ENCODE measurements at regions of chr15 and their contacts with region 1.

Region 1: DNA sequence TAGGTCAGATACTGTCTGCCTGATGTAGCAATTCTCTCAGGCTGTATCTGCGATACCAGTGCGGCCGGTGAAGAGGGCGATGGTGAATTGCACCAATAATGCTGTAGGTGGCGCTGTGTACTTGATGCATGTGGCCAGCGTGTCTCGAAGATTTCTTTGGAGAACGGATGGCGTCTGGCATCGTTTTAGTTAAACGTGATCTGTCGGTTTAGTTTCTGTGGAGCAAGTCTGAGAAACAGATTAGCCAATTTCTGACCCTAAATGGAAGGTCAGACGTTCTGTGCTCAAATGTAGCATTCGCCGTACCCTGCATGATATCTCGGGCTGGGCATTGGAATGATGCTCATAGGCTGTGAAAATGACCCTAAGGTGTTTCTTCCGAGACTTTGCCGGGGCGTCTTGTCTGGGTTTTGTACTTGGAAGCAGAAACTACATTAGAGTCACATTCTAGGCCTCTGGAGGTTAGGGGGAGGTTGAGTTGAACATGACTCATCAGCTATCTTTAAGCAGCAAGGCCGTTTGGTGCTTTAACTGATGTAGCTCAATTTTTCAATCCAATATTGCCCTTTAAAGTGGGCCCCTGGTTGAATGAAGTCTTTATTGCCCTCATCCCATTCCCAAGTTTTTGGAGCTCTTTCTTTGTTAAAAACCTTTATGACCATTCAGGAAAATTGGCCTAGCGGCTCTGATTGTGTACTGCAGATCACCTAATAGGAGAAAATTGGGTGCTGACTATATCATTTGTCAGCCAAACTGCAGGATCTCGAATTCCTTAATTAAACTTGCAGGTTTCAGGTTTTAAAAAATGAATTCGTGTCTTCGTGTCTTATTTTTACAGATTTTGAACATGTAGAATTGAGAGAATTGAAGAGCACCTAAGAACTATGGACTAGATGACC is 80.0 kb downstream of the SQOR start:
- DNase-seq: peak; percentile 65
- H3K4me3 ChIP-seq: no peak overlapping the region
- H3K27ac ChIP-seq: peak overlapping the region in 3 of 4 donors; percentile 13 to 48 (median 47)
- H3K4me1 ChIP-seq: peaks cover 4 to 12% (median 7%) of the 10 kb centered on the region in 4 donors
- H3K27me3 ChIP-seq: peaks cover 4% of the 10 kb centered on the region
- CTCF ChIP-seq: peak; percentile 79 to 90 (median 83)
- EP300 ChIP-seq: no peak
- POLR2A ChIP-seq: no peak

Region 2: DNA sequence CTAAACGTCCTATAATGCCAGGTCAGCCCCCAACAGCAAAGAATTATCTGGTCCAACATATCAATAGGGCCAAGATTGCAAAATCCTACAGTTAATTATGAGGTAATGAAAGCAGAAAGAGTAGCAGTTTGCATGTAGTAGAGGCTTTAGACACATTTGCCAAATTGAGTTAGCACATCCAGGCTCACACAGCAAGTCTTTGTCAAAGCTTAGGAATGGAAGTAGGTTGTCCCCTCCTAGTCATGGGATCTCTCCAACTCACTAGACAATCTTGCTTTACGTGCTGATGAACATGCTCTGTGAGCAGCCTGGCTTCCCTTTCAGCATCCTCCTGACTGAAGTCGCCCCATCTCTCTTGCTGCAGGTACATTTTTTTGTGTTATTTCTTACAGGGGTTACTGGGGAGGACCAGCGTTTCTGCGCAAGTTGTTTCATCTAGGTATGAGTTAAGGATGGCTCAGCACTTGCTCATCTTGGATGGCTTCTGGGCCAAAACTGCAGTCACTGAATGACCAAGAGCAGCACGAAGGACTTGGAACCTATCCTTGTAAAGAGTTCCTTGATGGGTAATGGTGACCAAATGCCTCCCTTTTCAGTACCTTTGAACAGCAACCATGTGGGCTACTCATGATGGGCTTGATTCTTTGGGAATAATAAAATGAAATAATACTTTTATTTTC is 24.1 kb before region 1 on chr15:
- in situ Hi-C with region 1: no loop called
- intact Hi-C with region 1: loop called (anchors 1 kb)
- DNase-seq: no peak
- H3K4me3 ChIP-seq: no peak overlapping the region
- H3K27ac ChIP-seq: no peak overlapping the region
- H3K4me1 ChIP-seq: no peaks in the 10 kb centered on the region
- H3K27me3 ChIP-seq: no peaks in the 10 kb centered on the region
- CTCF ChIP-seq: no peak
- EP300 ChIP-seq: no peak
- POLR2A ChIP-seq: no peak

Region 3: GRCh38 chr15:45780352-45780751 is 65.5 kb after region 1 on chr15:
- in situ Hi-C with region 1: no loop called
- intact Hi-C with region 1: loop called (anchors 5 kb)
- DNase-seq: no peak
- H3K4me3 ChIP-seq: no peak overlapping the region
- H3K27ac ChIP-seq: no peak overlapping the region
- H3K4me1 ChIP-seq: no peaks in the 10 kb centered on the region
- H3K27me3 ChIP-seq: peaks cover 4% of the 10 kb centered on the region
- CTCF ChIP-seq: no peak
- EP300 ChIP-seq: no peak
- POLR2A ChIP-seq: no peak

Region 4: DNA sequence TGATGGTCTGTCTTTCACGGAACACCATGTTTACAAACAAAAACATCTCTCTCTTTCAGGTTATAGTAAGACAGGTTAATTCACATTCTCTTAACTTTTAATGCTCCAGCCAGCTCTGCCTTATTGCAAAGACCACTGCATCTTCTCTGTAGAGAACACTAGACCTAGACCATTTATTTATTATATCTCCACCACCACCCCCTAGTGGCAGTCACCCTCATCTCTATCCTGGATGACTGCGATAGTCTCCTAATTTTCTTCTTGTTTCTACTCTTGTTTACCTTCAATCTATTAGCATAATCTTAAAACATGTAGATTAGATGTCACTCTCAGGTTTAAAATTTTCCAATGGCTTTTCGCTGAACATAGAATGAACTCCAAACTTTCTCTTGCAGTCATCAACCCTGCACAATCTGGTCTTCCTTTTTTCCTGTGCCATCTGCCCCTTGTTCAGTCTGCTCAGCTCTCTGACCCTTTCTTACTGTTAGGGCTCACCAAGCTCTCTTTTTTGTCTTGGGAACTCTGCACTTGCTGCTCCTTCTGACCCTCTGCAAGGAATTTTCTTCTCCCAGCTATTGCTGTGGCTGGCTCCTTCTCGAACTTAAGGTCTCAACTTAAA is 75.6 kb after region 1 on chr15:
- in situ Hi-C with region 1: no loop called
- intact Hi-C with region 1: loop called (anchors 1 kb)
- DNase-seq: peak; percentile 34
- H3K4me3 ChIP-seq: no peak overlapping the region
- H3K27ac ChIP-seq: no peak overlapping the region
- H3K4me1 ChIP-seq: peaks cover 0 to 5% (median 0%) of the 10 kb centered on the region in 4 donors
- H3K27me3 ChIP-seq: no peaks in the 10 kb centered on the region
- CTCF ChIP-seq: peak; percentile 51 to 58 (median 51)
- EP300 ChIP-seq: no peak
- POLR2A ChIP-seq: no peak

Measured in transverse colon (tissue), 4 donors.